Activated naive CD4-positive, alpha-beta T cell treated with anti-CD3 and anti-CD28 coated beads for 36 hours (primary cell): ENCODE measurements at regions of chr5 and their contacts with region 1.

Region 1: GRCh38 chr5:67209142-67209771 is 12.7 kb upstream of the CD180 start:
- DNase-seq: peak; percentile 79
- H3K4me3 Mint-ChIP-seq: no peak overlapping the region
- H3K27ac Mint-ChIP-seq: peak overlapping the region; percentile 50
- H3K4me1 Mint-ChIP-seq: peaks cover 56% of the 10 kb centered on the region
- H3K27me3 Mint-ChIP-seq: no peaks in the 10 kb centered on the region

Region 2: DNA sequence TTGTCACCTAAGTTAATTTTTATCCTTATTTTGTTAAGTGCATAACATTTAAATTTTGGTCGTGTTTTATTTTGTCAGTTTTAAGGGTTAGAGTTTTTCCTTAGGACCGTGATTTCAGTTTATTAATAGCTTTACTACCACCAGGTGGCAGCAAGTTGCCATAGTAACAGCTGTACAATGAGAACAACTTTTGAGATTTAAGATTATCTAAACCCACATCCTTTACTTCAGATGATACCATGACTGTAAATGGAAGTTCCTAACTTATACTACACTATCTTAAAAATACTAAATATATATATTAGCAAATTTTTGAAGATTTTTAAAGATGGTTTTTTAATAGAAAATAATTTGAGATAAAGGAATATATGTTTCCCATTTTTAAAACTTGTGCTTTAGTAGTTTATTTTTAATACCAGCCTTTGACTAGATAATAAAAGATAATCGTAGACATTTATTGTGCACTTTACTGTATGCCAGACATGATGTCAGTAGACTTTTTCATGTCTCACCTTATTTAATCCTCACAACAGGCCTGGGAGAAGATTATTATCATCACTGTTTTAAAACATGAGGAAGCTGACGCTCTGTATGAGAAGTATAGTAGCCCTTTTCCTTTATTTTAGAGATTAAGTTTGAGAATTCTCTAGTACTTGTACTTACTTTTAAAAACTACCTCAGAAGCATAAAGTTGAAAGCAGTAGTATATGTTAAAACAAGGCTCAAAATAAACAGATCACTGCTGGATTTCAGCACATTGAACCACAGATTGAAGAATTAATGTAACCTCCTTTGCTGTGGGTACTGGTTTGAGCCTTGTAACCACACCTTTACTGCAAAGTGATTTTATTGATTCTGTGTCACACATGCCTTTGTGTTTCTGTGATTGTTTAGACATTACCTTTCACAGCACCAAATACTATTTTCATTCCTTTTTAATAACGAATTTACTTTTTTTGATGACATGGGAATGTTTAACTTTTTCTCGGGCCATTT is 1037.6 kb before region 1 on chr5:
- CTCF ChIA-PET with region 1: no interaction called
- intact Hi-C with region 1: loop called (anchors 2 kb)
- DNase-seq: peak; percentile 71
- H3K4me3 Mint-ChIP-seq: no peak overlapping the region
- H3K27ac Mint-ChIP-seq: no peak overlapping the region
- H3K4me1 Mint-ChIP-seq: peaks cover 30% of the 10 kb centered on the region
- H3K27me3 Mint-ChIP-seq: no peaks in the 10 kb centered on the region

Region 3: GRCh38 chr5:66553916-66554575 is 655.2 kb before region 1 on chr5:
- CTCF ChIA-PET with region 1: no interaction called
- intact Hi-C with region 1: loop called (anchors 5 kb)
- DNase-seq: peak; percentile 77
- H3K4me3 Mint-ChIP-seq: no peak overlapping the region
- H3K27ac Mint-ChIP-seq: peak overlapping the region; percentile 13
- H3K4me1 Mint-ChIP-seq: peaks cover 29% of the 10 kb centered on the region
- H3K27me3 Mint-ChIP-seq: peaks cover 22% of the 10 kb centered on the region

Region 4: DNA sequence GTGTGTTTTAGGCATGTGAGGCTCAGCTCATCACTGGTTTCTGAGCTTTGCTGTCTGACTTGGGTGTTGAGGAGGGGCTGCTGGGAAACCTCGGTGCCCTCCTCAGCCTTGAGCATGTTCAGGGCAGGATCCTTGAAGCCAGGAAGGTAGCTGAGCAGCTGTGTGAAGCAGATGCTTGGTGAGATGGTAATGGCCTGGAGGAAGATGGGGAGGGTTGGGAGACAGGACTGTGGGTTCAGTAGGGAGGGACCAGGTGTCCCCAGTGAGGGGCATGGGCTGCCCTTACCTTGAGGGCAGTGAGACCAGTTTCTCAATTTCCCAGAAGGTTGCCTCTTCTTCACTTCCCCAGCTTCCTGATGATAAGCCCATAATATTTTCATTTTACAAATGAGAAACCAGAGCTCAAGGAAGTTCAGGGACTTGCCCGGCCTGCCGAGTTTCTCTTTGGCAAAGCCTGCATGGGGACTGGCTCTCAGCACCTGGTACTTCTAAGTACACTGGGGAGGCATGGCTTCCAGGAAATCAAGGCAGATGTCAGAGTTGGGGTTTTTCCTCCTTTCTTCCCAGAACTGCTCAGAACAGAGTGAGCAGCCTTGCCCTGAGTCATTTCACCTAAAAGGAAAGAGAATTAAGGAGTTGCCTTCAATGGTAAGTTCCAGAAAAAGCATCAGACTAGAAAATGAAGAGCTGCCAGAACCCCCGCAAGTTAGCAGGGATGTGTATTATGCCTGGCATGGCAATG is 387.4 kb before region 1 on chr5:
- CTCF ChIA-PET with region 1: interaction called, 3 read pairs
- intact Hi-C with region 1: loop called (anchors 1 kb)
- DNase-seq: peak; percentile 87
- H3K4me3 Mint-ChIP-seq: peak overlapping the region; percentile 33
- H3K27ac Mint-ChIP-seq: peak overlapping the region; percentile 95
- H3K4me1 Mint-ChIP-seq: peaks cover 27% of the 10 kb centered on the region
- H3K27me3 Mint-ChIP-seq: no peaks in the 10 kb centered on the region

Region 5: GRCh38 chr5:66987949-66988838 is 221.1 kb before region 1 on chr5:
- CTCF ChIA-PET with region 1: interaction called, 3 read pairs
- intact Hi-C with region 1: loop called (anchors 1 kb)
- DNase-seq: no peak
- H3K4me3 Mint-ChIP-seq: no peak overlapping the region
- H3K27ac Mint-ChIP-seq: no peak overlapping the region
- H3K4me1 Mint-ChIP-seq: peaks cover 8% of the 10 kb centered on the region
- H3K27me3 Mint-ChIP-seq: no peaks in the 10 kb centered on the region

Region 6: DNA sequence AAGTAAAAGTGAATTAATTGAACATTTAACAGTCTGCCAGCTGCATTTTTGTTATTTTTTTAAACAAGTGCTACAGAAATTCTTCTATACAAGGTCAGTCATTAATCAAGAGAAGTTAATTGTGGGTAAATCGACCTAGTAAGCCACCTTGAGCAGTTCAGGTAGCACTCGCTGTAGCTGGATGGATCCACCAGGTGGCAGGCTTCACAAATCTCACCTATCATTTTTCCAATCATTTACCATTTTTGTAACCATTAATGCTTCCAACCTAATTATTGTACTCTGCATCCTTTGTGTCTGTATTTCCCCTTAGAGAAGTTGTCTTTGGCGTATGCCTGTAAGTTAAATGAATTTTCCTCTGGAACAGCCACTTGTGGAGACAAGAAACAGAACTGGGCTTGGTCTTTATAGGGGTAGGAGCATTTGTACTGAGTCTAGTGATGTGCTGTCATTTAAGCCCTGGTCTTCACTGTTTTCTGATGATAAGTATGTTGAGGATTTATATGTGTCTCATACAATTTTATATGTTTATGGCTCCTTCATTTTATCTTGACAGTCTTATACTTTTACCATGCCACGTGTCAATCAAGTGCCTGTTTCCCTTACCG is 52.2 kb before region 1 on chr5:
- CTCF ChIA-PET with region 1: interaction called, 354 read pairs
- intact Hi-C with region 1: loop called (anchors 1 kb)
- DNase-seq: peak; percentile 70
- H3K4me3 Mint-ChIP-seq: no peak overlapping the region
- H3K27ac Mint-ChIP-seq: no peak overlapping the region
- H3K4me1 Mint-ChIP-seq: peaks cover 35% of the 10 kb centered on the region
- H3K27me3 Mint-ChIP-seq: no peaks in the 10 kb centered on the region